Naive thymus-derived CD4-positive, alpha-beta T cell (primary cell): ENCODE measurements at regions of chrX and their contacts with region 1.

Region 1: GRCh38 chrX:15143050-15143824 is 126.6 kb downstream of the ASB9 start:
- DNase-seq: peak in 7 of 9 donors; percentile 5 to 45 (median 39)
- ATAC-seq: peak; percentile 63
- H3K4me3 ChIP-seq: no peak overlapping the region
- H3K4me3 Mint-ChIP-seq: peak overlapping the region in 9 of 10 donors; percentile 10 to 77 (median 58)
- H3K27ac ChIP-seq: no peak overlapping the region
- H3K27ac Mint-ChIP-seq: peak overlapping the region in 6 of 9 donors; percentile 17 to 91 (median 70)
- H3K4me1 ChIP-seq: peaks cover 0 to 5% of the 10 kb centered on the region in 2 donors
- H3K4me1 Mint-ChIP-seq: peaks cover 4 to 23% (median 17%) of the 10 kb centered on the region in 7 donors
- H3K27me3 ChIP-seq: no peaks in the 10 kb centered on the region
- H3K27me3 Mint-ChIP-seq: peaks cover 0 to 3% (median 0%) of the 10 kb centered on the region in 5 donors

Region 2: DNA sequence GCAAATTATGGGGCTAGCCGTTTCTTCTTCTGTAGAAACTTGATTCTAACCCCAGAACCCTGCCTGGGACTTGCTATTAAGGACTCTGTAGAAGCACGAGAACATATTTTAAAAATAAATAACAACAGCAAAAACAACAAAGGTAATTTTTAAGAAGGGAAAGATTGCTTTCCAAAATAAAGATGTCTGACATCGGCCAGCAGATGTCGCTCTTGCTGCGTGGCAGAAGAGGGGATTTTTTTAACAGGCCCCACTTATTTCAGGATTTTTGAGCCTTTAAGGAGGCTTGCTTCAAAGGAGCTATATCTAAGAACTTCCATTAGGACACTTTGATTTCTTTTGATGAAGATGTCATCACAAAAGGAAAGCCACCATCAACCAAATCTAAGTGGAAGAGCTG is 1636.7 kb before region 1 on chrX:
- CTCF ChIA-PET with region 1: no interaction called
- POLR2A ChIA-PET with region 1: no interaction called
- intact Hi-C with region 1: loop called in 1 of 2 experiments (anchors 2 kb)
- DNase-seq: peak in 8 of 9 donors; percentile 10 to 47 (median 32)
- ATAC-seq: no peak
- H3K4me3 ChIP-seq: no peak overlapping the region
- H3K4me3 Mint-ChIP-seq: no peak overlapping the region
- H3K27ac ChIP-seq: no peak overlapping the region
- H3K27ac Mint-ChIP-seq: peak overlapping the region in 1 of 9 donors; percentile 15
- H3K4me1 ChIP-seq: no peaks in the 10 kb centered on the region
- H3K4me1 Mint-ChIP-seq: peaks cover 0 to 8% (median 2%) of the 10 kb centered on the region in 7 donors
- H3K27me3 ChIP-seq: no peaks in the 10 kb centered on the region
- H3K27me3 Mint-ChIP-seq: no peaks in the 10 kb centered on the region

Region 3: GRCh38 chrX:13520936-13521335 is 1622.3 kb before region 1 on chrX:
- CTCF ChIA-PET with region 1: no interaction called
- POLR2A ChIA-PET with region 1: no interaction called
- intact Hi-C with region 1: no loop called
- DNase-seq: no peak
- ATAC-seq: no peak
- H3K4me3 ChIP-seq: no peak overlapping the region
- H3K4me3 Mint-ChIP-seq: no peak overlapping the region
- H3K27ac ChIP-seq: no peak overlapping the region
- H3K27ac Mint-ChIP-seq: no peak overlapping the region
- H3K4me1 ChIP-seq: no peaks in the 10 kb centered on the region
- H3K4me1 Mint-ChIP-seq: no peaks in the 10 kb centered on the region
- H3K27me3 ChIP-seq: no peaks in the 10 kb centered on the region
- H3K27me3 Mint-ChIP-seq: peaks cover 0 to 5% (median 0%) of the 10 kb centered on the region in 5 donors

Region 4: GRCh38 chrX:14039344-14039743 is 1103.9 kb before region 1 on chrX:
- CTCF ChIA-PET with region 1: interaction called, 4 read pairs
- POLR2A ChIA-PET with region 1: no interaction called
- intact Hi-C with region 1: loop called in 1 of 2 experiments (anchors 1 kb)
- DNase-seq: peak in 7 of 9 donors; percentile 38 to 73 (median 62)
- ATAC-seq: peak; percentile 95
- H3K4me3 ChIP-seq: no peak overlapping the region
- H3K4me3 Mint-ChIP-seq: no peak overlapping the region
- H3K27ac ChIP-seq: no peak overlapping the region
- H3K27ac Mint-ChIP-seq: no peak overlapping the region
- H3K4me1 ChIP-seq: no peaks in the 10 kb centered on the region
- H3K4me1 Mint-ChIP-seq: no peaks in the 10 kb centered on the region
- H3K27me3 ChIP-seq: no peaks in the 10 kb centered on the region
- H3K27me3 Mint-ChIP-seq: peaks cover 0 to 21% (median 0%) of the 10 kb centered on the region in 5 donors

Region 5: DNA sequence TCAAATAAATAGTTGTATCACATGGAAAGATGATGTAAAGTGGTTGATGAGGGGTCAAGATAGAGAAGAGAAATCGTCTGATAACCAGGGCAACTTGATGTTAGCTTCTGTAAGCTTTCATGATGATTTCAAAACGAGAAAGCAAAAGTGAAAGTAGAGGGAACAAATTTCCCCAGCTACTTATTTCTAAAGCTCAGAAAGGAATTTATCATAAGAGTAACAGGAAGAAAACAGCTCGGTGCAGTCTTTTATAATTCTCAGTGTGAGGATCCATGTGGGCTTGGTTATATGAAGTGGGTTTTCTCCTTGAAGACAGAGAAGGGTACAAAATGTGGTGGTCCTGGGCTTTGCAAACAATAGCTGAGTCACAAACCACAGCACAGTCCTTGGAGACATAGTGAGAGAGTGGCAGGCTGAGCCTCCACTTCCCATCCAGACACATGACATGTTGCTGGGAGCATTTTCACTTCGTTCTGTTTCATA is 646.0 kb before region 1 on chrX:
- CTCF ChIA-PET with region 1: no interaction called
- POLR2A ChIA-PET with region 1: no interaction called
- intact Hi-C with region 1: loop called in 1 of 2 experiments (anchors 10 kb)
- DNase-seq: peak in 5 of 9 donors; percentile 3 to 29 (median 24)
- ATAC-seq: peak; percentile 37
- H3K4me3 ChIP-seq: peak overlapping the region; percentile 55
- H3K4me3 Mint-ChIP-seq: peak overlapping the region; percentile 34 to 89 (median 84)
- H3K27ac ChIP-seq: peak overlapping the region; percentile 49
- H3K27ac Mint-ChIP-seq: peak overlapping the region; percentile 82 to 96 (median 89)
- H3K4me1 ChIP-seq: no peaks in the 10 kb centered on the region
- H3K4me1 Mint-ChIP-seq: peaks cover 5 to 24% (median 21%) of the 10 kb centered on the region in 7 donors
- H3K27me3 ChIP-seq: no peaks in the 10 kb centered on the region
- H3K27me3 Mint-ChIP-seq: peaks cover 0 to 2% (median 0%) of the 10 kb centered on the region in 5 donors

Region 6: GRCh38 chrX:15107367-15107988 is 35.8 kb before region 1 on chrX:
- CTCF ChIA-PET with region 1: no interaction called
- POLR2A ChIA-PET with region 1: no interaction called
- intact Hi-C with region 1: loop called (anchors 1 kb)
- DNase-seq: peak in 1 of 9 donors; percentile 2
- ATAC-seq: no peak
- H3K4me3 ChIP-seq: no peak overlapping the region
- H3K4me3 Mint-ChIP-seq: no peak overlapping the region
- H3K27ac ChIP-seq: no peak overlapping the region
- H3K27ac Mint-ChIP-seq: no peak overlapping the region
- H3K4me1 ChIP-seq: no peaks in the 10 kb centered on the region
- H3K4me1 Mint-ChIP-seq: peaks cover 0 to 17% (median 7%) of the 10 kb centered on the region in 7 donors
- H3K27me3 ChIP-seq: no peaks in the 10 kb centered on the region
- H3K27me3 Mint-ChIP-seq: peaks cover 0 to 9% (median 4%) of the 10 kb centered on the region in 5 donors

Region 7: DNA sequence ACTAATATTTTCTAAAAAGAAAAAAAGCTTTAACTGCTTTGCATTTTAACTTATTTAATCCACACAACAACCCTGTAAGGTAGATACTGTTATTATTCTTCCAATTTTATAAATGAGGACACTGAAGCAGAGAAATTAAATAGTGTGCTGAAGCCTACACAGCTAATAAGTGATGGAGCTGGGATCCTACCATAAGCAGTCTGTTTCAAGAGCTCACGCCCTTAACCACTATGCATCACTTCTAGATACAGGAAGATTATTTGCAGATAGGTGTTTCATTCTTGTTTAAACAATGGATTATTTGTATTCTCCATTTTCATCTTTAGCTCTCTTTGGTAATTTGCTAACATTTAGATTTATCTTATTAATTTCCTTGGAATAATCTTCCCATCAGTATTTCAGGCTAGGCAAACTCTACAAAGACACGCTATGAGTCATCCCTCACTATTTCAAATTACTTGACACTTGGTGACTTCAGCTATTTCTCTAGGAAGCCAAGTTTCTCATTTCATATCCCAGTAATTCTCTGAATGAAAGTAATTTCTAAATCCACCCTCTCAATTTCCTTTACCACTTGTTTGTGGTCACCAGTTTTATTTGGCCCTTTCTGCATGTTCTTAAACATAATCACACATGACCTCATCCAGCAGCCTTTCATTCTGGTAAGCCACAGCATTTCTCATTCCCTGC is 59.4 kb after region 1 on chrX:
- CTCF ChIA-PET with region 1: interaction called, 3 read pairs
- POLR2A ChIA-PET with region 1: no interaction called
- intact Hi-C with region 1: loop called in 1 of 2 experiments (anchors 5 kb)
- DNase-seq: no peak
- ATAC-seq: no peak
- H3K4me3 ChIP-seq: no peak overlapping the region
- H3K4me3 Mint-ChIP-seq: peak overlapping the region in 1 of 10 donors; percentile 38
- H3K27ac ChIP-seq: no peak overlapping the region
- H3K27ac Mint-ChIP-seq: peak overlapping the region in 2 of 9 donors; percentile 76 to 84
- H3K4me1 ChIP-seq: peaks cover 0 to 14% of the 10 kb centered on the region in 2 donors
- H3K4me1 Mint-ChIP-seq: peaks cover 9 to 47% (median 24%) of the 10 kb centered on the region in 7 donors
- H3K27me3 ChIP-seq: no peaks in the 10 kb centered on the region
- H3K27me3 Mint-ChIP-seq: peaks cover 0 to 7% (median 0%) of the 10 kb centered on the region in 5 donors